ENCODE measurements at regions of chr7 and their contacts with region 1.

Region 1: DNA sequence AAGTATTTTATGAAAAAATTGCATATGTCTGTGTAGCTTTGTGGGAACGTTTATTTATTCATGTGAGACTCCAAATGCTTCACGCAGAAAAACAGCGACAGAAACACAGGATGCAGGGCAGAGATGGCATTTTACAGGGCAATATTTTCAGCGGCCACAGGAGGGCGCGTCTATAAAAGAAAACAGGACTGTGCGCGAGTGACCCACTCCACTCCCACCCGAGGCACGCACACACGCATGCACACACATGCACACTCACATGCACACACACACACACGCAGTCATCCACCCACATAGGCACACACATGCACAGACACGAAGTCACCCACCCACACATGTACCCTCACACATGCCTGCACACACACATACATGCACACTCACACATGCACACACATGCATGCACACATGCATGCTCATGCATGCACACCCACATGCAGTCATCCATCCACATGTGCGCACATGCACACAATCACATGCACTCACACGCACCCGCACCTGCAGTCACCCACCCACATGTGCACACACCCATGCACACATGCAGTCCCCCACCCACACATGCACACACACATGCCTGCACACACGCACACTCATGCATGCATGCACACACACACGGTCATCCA is 96.3 kb downstream of the DNAJB6 start:
- DNase-seq: peak in 1 of 2 donors; percentile 37
- ATAC-seq: peak in 7 of 8 donors; percentile 18 to 66 (median 56)
- H3K4me3 ChIP-seq: peak overlapping the region in 6 of 10 donors; percentile 22 to 42 (median 24)
- H3K27ac ChIP-seq: no peak overlapping the region
- H3K4me1 ChIP-seq: peaks cover 0 to 11% (median 8%) of the 10 kb centered on the region in 9 donors
- H3K27me3 ChIP-seq: no peaks in the 10 kb centered on the region
- CTCF ChIP-seq: peak; percentile 45 to 75 (median 69)

Region 2: GRCh38 chr7:156969972-156970420 is 463.1 kb before region 1 on chr7:
- intact Hi-C with region 1: loop called in 1 of 10 experiments (anchors 10 kb)
- DNase-seq: no peak
- ATAC-seq: peak in 1 of 8 donors; percentile 40
- H3K4me3 ChIP-seq: no peak overlapping the region
- H3K27ac ChIP-seq: no peak overlapping the region
- H3K4me1 ChIP-seq: no peaks in the 10 kb centered on the region
- H3K27me3 ChIP-seq: no peaks in the 10 kb centered on the region
- CTCF ChIP-seq: peak in 8 of 9 donors; percentile 16 to 55 (median 43)

Region 3: GRCh38 chr7:157339777-157340677 is 93.0 kb before region 1 on chr7:
- intact Hi-C with region 1: no loop called
- DNase-seq: peak; percentile 39 to 67
- ATAC-seq: peak in 4 of 8 donors; percentile 25 to 40 (median 36)
- H3K4me3 ChIP-seq: peak overlapping the region in 5 of 10 donors; percentile 3 to 87 (median 12)
- H3K27ac ChIP-seq: peak overlapping the region in 8 of 10 donors; percentile 5 to 90 (median 40)
- H3K4me1 ChIP-seq: peaks cover 6 to 78% (median 63%) of the 10 kb centered on the region in 9 donors
- H3K27me3 ChIP-seq: no peaks in the 10 kb centered on the region
- CTCF ChIP-seq: peak; percentile 75 to 95 (median 89)

Region 4: DNA sequence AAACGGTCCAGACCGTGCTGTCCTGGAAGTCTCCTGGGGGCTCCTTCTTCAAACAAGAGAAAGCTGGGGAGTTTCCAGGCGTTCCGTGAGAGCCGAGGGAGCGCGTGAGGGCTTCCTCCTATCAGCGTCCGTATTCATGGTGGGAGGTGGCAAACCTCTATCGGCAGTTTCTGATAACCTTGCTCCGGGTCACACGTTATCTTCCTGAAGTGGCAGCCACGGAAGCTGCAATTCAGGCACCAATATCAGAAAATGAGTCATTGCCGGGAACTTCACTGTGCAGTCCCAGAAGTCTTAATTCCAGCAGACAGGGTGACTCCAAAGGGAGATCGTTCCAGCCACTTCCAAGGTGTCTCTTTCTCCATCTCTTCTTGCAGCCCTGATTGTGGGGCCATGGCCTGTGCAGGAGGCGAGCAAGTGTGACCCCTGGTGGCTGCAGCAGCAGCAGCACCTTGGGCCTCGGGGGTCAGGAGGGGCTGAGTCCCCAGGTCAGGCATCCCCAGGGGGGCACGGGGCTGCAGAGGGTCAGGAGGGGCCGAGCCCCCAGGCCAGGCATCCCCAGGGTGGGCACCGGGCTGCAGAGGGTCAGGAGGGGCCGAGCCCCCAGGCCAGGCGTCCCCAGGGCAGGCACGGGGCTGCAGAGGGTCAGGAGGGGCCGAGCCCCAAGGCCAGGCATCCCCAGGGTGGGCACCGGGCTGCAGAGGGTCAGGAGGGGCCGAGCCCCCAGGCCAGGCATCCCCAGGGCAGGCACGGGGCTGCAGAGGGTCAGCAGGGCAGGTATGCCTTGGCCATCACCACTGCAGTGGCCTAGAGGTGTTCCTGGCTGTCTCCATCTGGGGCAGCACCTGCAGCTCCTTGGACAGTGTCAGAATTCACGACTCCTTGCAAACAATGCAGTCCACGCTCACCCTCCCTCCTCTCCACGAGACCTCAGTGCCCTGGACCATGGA is 442.4 kb after region 1 on chr7:
- intact Hi-C with region 1: loop called (anchors 2 to 10 kb)
- DNase-seq: no peak
- ATAC-seq: peak in 7 of 8 donors; percentile 33 to 70 (median 56)
- H3K4me3 ChIP-seq: no peak overlapping the region
- H3K27ac ChIP-seq: no peak overlapping the region
- H3K4me1 ChIP-seq: peaks cover 0 to 9% (median 5%) of the 10 kb centered on the region in 9 donors
- H3K27me3 ChIP-seq: peaks cover 4 to 43% (median 23%) of the 10 kb centered on the region in 7 donors
- CTCF ChIP-seq: peak; percentile 25 to 69 (median 63)

Region 5: DNA sequence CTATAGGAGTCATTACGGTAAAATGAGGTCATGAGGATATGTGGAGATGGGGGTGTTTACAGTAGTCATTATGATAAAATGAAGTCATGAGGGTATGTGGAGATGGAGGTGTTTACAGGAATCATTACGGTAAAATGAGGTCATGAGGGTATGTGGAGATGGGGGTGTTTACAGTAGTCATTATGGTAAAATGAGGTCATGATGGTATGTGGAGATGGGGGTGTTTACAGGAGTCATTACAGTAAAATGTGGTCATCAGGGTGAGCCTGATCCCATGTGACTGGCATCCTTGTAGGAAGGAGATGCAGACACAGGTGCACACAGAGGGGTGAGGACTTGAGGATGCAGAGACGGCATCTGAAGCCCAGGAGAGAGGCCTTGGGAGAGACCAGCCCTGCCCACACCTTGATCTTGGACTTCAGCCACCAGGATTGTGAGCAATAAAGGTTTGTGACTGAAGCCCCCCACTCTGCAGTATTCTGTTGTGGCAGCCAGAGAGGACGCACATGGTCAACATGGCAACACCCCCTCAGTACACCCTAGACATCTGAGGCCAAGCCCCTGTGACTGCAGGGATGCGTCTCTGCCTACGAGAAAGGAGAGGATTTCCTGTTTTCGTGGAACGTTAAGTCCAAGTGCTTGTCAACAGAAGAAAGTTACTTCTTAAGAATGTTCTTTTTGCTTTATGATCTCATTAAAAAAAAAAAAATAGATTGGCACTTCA is 448.1 kb after region 1 on chr7:
- intact Hi-C with region 1: loop called in 8 of 10 experiments (anchors 2 to 10 kb)
- DNase-seq: no peak
- ATAC-seq: no peak
- H3K4me3 ChIP-seq: no peak overlapping the region
- H3K27ac ChIP-seq: no peak overlapping the region
- H3K4me1 ChIP-seq: no peaks in the 10 kb centered on the region
- H3K27me3 ChIP-seq: peaks cover 0 to 19% (median 11%) of the 10 kb centered on the region in 7 donors
- CTCF ChIP-seq: no peak

Region 6: GRCh38 chr7:158407581-158408317 is 974.7 kb after region 1 on chr7:
- intact Hi-C with region 1: loop called in 2 of 10 experiments (anchors 5 to 10 kb)
- DNase-seq: no peak
- ATAC-seq: peak in 2 of 8 donors; percentile 39 to 57
- H3K4me3 ChIP-seq: no peak overlapping the region
- H3K27ac ChIP-seq: no peak overlapping the region
- H3K4me1 ChIP-seq: no peaks in the 10 kb centered on the region
- H3K27me3 ChIP-seq: peaks cover 4 to 42% (median 17%) of the 10 kb centered on the region in 7 donors
- CTCF ChIP-seq: peak in 8 of 9 donors; percentile 18 to 61 (median 48)